Upper lobe of right lung (tissue), 1 donor: ENCODE measurements at regions of chr19 and their contacts with region 1.

Region 1: GRCh38 chr19:6218491-6219162 is 61.1 kb downstream of the MLLT1 start:
- DNase-seq: peak; percentile 92
- ATAC-seq: peak; percentile 84
- H3K4me3 ChIP-seq: no peak overlapping the region
- H3K27ac ChIP-seq: peak overlapping the region; percentile 36
- H3K4me1 ChIP-seq: peaks cover 41% of the 10 kb centered on the region
- H3K27me3 ChIP-seq: no peaks in the 10 kb centered on the region
- CTCF ChIP-seq: peak; percentile 98

Region 2: DNA sequence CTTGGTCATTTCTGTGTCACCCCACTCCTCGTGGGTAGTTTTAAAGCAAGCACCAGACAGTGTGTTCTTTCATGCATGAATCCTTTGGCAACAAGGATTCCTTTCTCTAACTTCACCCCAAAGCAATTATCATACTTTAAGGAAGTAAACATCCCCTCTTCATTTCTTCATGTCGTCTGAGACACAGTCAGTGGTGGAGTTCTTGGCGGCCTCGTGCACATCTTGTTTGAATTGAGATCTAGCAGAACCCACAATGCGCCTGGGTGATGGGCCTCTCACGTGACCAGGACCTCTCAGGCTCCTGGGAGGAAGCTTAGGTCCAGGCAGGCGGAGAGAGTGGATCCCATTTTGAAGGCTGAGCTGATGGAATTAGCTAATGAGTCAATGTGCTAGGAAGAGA is 80.6 kb before region 1 on chr19:
- intact Hi-C with region 1: no loop called
- DNase-seq: no peak
- ATAC-seq: no peak
- H3K4me3 ChIP-seq: no peak overlapping the region
- H3K27ac ChIP-seq: no peak overlapping the region
- H3K4me1 ChIP-seq: no peaks in the 10 kb centered on the region
- H3K27me3 ChIP-seq: no peaks in the 10 kb centered on the region
- CTCF ChIP-seq: no peak

Region 3: DNA sequence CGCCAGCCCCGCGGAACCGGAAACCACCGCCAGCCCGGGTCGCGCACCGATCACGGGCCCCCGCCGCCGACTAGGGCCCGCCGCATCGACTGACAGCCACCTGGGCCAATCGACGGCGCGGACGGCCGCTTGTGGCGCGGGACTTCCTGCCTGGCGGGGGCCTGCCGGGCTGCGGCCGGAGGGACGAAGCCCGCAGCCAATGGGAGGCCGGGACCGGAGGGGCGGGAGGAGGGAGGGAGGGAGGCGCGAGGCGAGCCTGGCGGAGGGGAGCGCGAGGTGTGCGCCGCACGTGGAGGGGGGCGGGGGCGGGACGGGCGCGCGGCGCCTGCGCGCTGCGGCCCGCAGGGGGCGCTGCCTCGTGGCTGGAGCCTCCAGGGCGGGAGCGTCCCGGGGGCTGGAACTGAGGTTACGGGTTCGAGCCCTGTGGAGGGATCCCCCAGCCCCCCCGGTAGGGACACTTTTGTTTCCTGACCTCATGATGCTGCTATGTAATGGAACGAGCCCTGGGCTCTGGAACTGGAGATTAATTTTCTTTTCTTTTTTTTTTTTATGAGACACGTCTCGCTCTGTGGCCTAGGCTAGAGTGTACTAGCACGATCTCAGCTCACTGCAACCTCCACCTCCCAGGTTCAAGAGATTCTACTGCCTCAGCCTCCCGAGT is 61.4 kb after region 1 on chr19 and contains the start of gene MLLT1:
- intact Hi-C with region 1: loop called (anchors 10 kb)
- DNase-seq: peak; percentile 99
- ATAC-seq: peak; percentile 99
- H3K4me3 ChIP-seq: peak within 1 kb of the TSS; percentile 87
- H3K27ac ChIP-seq: peak within 1 kb of the TSS; percentile 81
- H3K4me1 ChIP-seq: peaks cover 41% of the 10 kb centered on the region
- H3K27me3 ChIP-seq: no peaks in the 10 kb centered on the region
- CTCF ChIP-seq: peak; percentile 67
- total RNA-seq, gene MLLT1: 73.4 TPM

Region 4: DNA sequence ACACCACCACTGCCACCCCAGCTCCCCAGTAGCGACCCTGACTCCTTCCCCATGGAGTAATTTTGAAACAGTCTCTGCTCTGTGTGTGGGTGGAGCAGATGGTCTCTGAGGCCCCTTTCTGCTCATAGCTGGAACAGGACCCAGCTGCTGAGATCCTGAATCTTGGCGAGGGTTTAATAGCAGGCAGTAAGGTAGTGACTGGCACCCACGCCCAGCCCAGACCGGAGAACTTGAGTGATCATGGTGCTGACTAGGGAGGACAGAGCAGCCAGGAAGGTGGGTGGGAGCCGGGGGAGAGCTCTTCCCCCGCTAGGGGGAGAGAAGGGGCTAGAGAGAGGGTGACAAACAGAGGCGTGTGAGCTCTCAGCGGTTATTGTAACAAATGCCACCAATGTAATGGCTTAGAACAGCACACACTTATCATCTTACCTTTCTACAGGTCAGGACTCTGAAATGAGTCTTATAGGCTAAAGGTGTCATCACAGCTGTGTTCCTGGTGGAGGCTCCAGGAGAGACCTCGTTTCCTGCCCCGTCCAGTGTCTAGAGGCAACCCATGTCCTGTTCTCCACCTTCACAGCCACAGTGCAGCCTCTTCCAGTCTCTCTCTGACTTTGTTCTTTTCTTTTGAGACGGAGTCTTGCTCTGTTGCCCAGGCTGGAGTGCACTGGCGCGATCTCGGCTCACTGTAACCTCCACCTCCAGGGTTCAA is 122.0 kb after region 1 on chr19:
- intact Hi-C with region 1: no loop called
- DNase-seq: no peak
- ATAC-seq: no peak
- H3K4me3 ChIP-seq: no peak overlapping the region
- H3K27ac ChIP-seq: no peak overlapping the region
- H3K4me1 ChIP-seq: no peaks in the 10 kb centered on the region
- H3K27me3 ChIP-seq: no peaks in the 10 kb centered on the region
- CTCF ChIP-seq: no peak